Naive thymus-derived CD4-positive, alpha-beta T cell (primary cell): ENCODE measurements at regions of chr16 and their contacts with region 1.

Region 1: DNA sequence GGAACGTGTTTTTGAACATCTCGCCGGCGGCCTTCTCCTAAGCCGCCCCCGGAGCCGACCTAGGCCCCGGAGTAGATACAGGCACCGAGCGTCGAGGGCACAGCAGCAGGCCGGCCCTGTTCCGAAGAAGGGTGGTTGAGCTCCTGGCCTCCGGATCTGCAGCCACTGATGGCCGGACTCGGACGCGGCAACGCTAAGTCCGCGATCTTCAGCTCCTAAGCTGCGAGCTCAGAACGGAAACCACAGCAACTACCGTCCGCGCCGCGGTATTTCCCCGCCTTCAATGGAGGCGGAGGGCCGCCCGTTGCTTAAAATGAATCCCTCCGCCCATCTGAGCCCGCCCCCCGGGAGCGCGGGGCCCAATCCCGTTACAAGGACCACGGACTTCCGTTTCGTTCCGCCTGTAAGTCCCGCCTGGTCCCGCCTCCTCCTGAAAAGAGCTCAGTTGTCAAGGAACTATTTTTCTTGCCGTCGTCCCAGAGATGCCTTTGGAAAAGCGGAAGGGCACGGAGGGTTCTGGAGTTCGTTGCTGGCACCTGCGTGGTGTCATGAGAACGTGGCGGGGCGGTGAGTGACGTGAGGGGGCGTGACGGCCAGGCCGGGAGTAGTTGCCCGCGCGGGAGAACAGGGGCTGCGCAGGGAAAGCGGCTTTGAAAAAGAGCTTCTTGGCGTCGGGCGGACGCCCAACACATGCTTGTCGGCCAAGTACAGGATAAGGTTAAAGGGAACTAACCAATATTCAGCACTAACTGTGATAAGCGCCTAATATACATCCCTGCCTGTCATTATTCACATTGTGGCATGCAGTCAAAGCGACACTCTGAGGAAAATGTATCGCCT is at the start of gene CFAP20:
- DNase-seq: peak; percentile 87 to 99 (median 97)
- ATAC-seq: peak; percentile 94
- H3K4me3 ChIP-seq: peak within 1 kb of the TSS; percentile 99
- H3K4me3 Mint-ChIP-seq: peak within 1 kb of the TSS; percentile 89 to 96 (median 92)
- H3K27ac ChIP-seq: peak within 1 kb of the TSS; percentile 90
- H3K27ac Mint-ChIP-seq: peak within 1 kb of the TSS; percentile 80 to 98 (median 94)
- H3K4me1 ChIP-seq: peaks cover 17 to 29% of the 10 kb centered on the region in 2 donors
- H3K4me1 Mint-ChIP-seq: peaks cover 30 to 47% (median 45%) of the 10 kb centered on the region in 7 donors
- H3K27me3 ChIP-seq: no peaks in the 10 kb centered on the region
- H3K27me3 Mint-ChIP-seq: no peaks in the 10 kb centered on the region
- total RNA-seq, gene CFAP20: 28.2 to 165 (median 40.7) TPM

Region 2: GRCh38 chr16:57300387-57301125 is 828.8 kb before region 1 on chr16:
- CTCF ChIA-PET with region 1: no interaction called
- POLR2A ChIA-PET with region 1: no interaction called
- intact Hi-C with region 1: loop called in 1 of 2 experiments (anchors 5 kb)
- DNase-seq: peak; percentile 98 to 100 (median 99)
- ATAC-seq: peak; percentile 96
- H3K4me3 ChIP-seq: peak overlapping the region; percentile 65
- H3K4me3 Mint-ChIP-seq: no peak overlapping the region
- H3K27ac ChIP-seq: peak overlapping the region; percentile 75
- H3K27ac Mint-ChIP-seq: no peak overlapping the region
- H3K4me1 ChIP-seq: peaks cover 16 to 28% of the 10 kb centered on the region in 2 donors
- H3K4me1 Mint-ChIP-seq: peaks cover 4 to 24% (median 11%) of the 10 kb centered on the region in 7 donors
- H3K27me3 ChIP-seq: no peaks in the 10 kb centered on the region
- H3K27me3 Mint-ChIP-seq: peaks cover 0 to 4% (median 0%) of the 10 kb centered on the region in 5 donors

Region 3: GRCh38 chr16:57810197-57811031 is 318.9 kb before region 1 on chr16:
- CTCF ChIA-PET with region 1: no interaction called
- POLR2A ChIA-PET with region 1: no interaction called
- intact Hi-C with region 1: loop called in 1 of 2 experiments (anchors 5 kb)
- DNase-seq: peak in 2 of 9 donors; percentile 20 to 79
- ATAC-seq: peak; percentile 97
- H3K4me3 ChIP-seq: peak overlapping the region; percentile 37
- H3K4me3 Mint-ChIP-seq: peak overlapping the region in 1 of 10 donors; percentile 70
- H3K27ac ChIP-seq: no peak overlapping the region
- H3K27ac Mint-ChIP-seq: peak overlapping the region in 4 of 9 donors; percentile 10 to 91 (median 16)
- H3K4me1 ChIP-seq: peaks cover 8 to 39% of the 10 kb centered on the region in 2 donors
- H3K4me1 Mint-ChIP-seq: peaks cover 8 to 30% (median 17%) of the 10 kb centered on the region in 7 donors
- H3K27me3 ChIP-seq: no peaks in the 10 kb centered on the region
- H3K27me3 Mint-ChIP-seq: peaks cover 23 to 40% (median 28%) of the 10 kb centered on the region in 5 donors

Region 4: GRCh38 chr16:58000706-58001676 is 128.3 kb before region 1 on chr16 and contains the start of gene USB1:
- CTCF ChIA-PET with region 1: interaction called, 3 read pairs
- POLR2A ChIA-PET with region 1: no interaction called
- intact Hi-C with region 1: loop called (anchors 1 kb)
- DNase-seq: peak; percentile 74 to 96 (median 86)
- ATAC-seq: peak; percentile 87
- H3K4me3 ChIP-seq: peak within 1 kb of the TSS; percentile 98
- H3K4me3 Mint-ChIP-seq: peak within 1 kb of the TSS; percentile 85 to 94 (median 92)
- H3K27ac ChIP-seq: peak within 1 kb of the TSS; percentile 85
- H3K27ac Mint-ChIP-seq: peak within 1 kb of the TSS; percentile 76 to 95 (median 90)
- H3K4me1 ChIP-seq: peaks cover 37% of the 10 kb centered on the region in 2 donors
- H3K4me1 Mint-ChIP-seq: peaks cover 31 to 75% (median 58%) of the 10 kb centered on the region in 7 donors
- H3K27me3 ChIP-seq: no peaks in the 10 kb centered on the region
- H3K27me3 Mint-ChIP-seq: no peaks in the 10 kb centered on the region
- total RNA-seq, gene USB1: 28.7 to 50.8 (median 28.9) TPM

Region 5: DNA sequence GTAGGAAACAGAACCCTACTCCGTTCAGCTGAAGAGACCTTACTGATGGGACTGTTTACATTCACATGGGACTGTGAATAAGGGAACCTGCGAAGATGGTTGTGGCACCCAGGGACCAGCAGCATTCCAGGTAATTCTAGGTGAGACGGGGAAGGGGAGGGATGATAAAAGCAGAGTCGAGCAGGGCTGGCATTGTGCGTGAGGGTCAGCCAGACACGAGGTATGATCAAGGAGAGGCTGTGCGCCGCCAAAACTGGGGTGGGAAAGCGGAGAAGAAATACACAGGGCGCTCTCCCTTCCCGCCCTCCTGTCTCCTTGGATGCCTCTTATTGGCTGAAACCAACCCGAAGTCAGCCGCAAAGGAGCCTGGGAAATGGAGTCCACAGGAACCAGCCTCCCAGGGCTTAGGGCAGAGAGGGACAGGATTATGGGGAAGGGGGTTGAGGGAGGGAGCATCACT is 106.9 kb after region 1 on chr16:
- CTCF ChIA-PET with region 1: no interaction called
- POLR2A ChIA-PET with region 1: no interaction called
- intact Hi-C with region 1: loop called (anchors 1 to 5 kb)
- DNase-seq: peak; percentile 18 to 56 (median 45)
- ATAC-seq: peak; percentile 89
- H3K4me3 ChIP-seq: peak overlapping the region; percentile 64
- H3K4me3 Mint-ChIP-seq: peak overlapping the region; percentile 82 to 93 (median 89)
- H3K27ac ChIP-seq: no peak overlapping the region
- H3K27ac Mint-ChIP-seq: peak overlapping the region in 4 of 9 donors; percentile 5 to 36 (median 23)
- H3K4me1 ChIP-seq: peaks cover 8 to 10% of the 10 kb centered on the region in 2 donors
- H3K4me1 Mint-ChIP-seq: peaks cover 0 to 17% (median 13%) of the 10 kb centered on the region in 7 donors
- H3K27me3 ChIP-seq: no peaks in the 10 kb centered on the region
- H3K27me3 Mint-ChIP-seq: peaks cover 5 to 47% (median 21%) of the 10 kb centered on the region in 5 donors

Region 6: GRCh38 chr16:58307583-58308312 is 178.4 kb after region 1 on chr16:
- CTCF ChIA-PET with region 1: no interaction called
- POLR2A ChIA-PET with region 1: no interaction called
- intact Hi-C with region 1: no loop called
- DNase-seq: no peak
- ATAC-seq: no peak
- H3K4me3 ChIP-seq: no peak overlapping the region
- H3K4me3 Mint-ChIP-seq: no peak overlapping the region
- H3K27ac ChIP-seq: no peak overlapping the region
- H3K27ac Mint-ChIP-seq: no peak overlapping the region
- H3K4me1 ChIP-seq: no peaks in the 10 kb centered on the region
- H3K4me1 Mint-ChIP-seq: no peaks in the 10 kb centered on the region
- H3K27me3 ChIP-seq: no peaks in the 10 kb centered on the region
- H3K27me3 Mint-ChIP-seq: peaks cover 0 to 27% (median 18%) of the 10 kb centered on the region in 5 donors

Region 7: GRCh38 chr16:58494981-58495520 is 365.7 kb after region 1 on chr16:
- CTCF ChIA-PET with region 1: no interaction called
- POLR2A ChIA-PET with region 1: no interaction called
- intact Hi-C with region 1: loop called in 1 of 2 experiments (anchors 5 kb)
- DNase-seq: peak in 8 of 9 donors; percentile 23 to 83 (median 56)
- ATAC-seq: peak; percentile 63
- H3K4me3 ChIP-seq: no peak overlapping the region
- H3K4me3 Mint-ChIP-seq: peak overlapping the region in 1 of 10 donors; percentile 11
- H3K27ac ChIP-seq: no peak overlapping the region
- H3K27ac Mint-ChIP-seq: peak overlapping the region in 5 of 9 donors; percentile 36 to 75 (median 59)
- H3K4me1 ChIP-seq: peaks cover 0 to 3% of the 10 kb centered on the region in 2 donors
- H3K4me1 Mint-ChIP-seq: peaks cover 0 to 14% (median 3%) of the 10 kb centered on the region in 7 donors
- H3K27me3 ChIP-seq: no peaks in the 10 kb centered on the region
- H3K27me3 Mint-ChIP-seq: peaks cover 0 to 14% (median 0%) of the 10 kb centered on the region in 5 donors

Region 8: DNA sequence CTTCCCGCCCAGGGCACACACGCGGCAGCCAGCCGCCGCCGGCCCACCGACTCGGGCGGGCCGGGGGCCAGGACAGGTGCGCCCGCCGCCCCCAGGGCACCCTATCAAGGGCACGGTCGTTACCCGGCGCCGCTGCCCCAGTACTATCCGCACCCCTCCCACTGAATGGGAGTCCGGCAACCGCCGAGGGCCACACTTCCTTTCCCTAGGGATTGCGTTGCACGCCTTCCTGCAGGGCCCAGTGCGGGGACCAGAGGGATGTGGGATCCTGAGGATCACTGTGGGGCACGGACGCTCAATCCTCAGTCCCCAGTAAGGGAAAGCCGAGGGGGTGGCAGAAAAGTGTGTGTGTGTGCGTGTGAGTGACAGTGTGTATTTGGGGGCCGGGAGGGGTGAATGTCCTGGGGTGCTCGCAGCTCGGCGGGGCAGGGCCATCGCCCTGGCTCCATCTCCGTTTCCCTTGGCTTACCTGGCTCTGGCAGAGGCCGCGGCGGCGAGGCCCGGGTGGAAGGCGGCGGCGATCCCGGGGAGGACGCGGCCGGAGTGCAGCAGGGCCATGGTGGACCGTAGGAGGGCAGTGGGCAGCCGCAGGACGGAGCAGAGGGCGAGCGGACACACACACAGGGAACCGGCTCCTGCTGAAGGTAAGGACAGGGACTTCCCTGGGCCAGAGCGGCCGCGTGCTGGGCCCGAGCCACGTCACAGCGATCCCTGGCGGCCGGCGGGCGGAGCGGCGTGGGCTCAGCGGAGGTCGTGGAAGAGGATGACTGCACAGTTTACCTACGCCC is 604.5 kb after region 1 on chr16 and contains the start of gene GOT2:
- CTCF ChIA-PET with region 1: no interaction called
- POLR2A ChIA-PET with region 1: no interaction called
- intact Hi-C with region 1: loop called (anchors 1 to 2 kb)
- DNase-seq: peak; percentile 61 to 87 (median 77)
- ATAC-seq: peak; percentile 99
- H3K4me3 ChIP-seq: peak within 1 kb of the TSS; percentile 83
- H3K4me3 Mint-ChIP-seq: peak within 1 kb of the TSS; percentile 93 to 99 (median 98)
- H3K27ac ChIP-seq: peak within 1 kb of the TSS; percentile 79
- H3K27ac Mint-ChIP-seq: peak within 1 kb of the TSS; percentile 31 to 95 (median 91)
- H3K4me1 ChIP-seq: peaks cover 9 to 15% of the 10 kb centered on the region in 2 donors
- H3K4me1 Mint-ChIP-seq: peaks cover 16 to 50% (median 42%) of the 10 kb centered on the region in 7 donors
- H3K27me3 ChIP-seq: no peaks in the 10 kb centered on the region
- H3K27me3 Mint-ChIP-seq: peaks cover 0 to 3% (median 0%) of the 10 kb centered on the region in 5 donors
- total RNA-seq, gene GOT2: 24.3 to 76.6 (median 38.0) TPM